ENCODE measurements at regions of chr20 and their contacts with region 1.

Region 1: DNA sequence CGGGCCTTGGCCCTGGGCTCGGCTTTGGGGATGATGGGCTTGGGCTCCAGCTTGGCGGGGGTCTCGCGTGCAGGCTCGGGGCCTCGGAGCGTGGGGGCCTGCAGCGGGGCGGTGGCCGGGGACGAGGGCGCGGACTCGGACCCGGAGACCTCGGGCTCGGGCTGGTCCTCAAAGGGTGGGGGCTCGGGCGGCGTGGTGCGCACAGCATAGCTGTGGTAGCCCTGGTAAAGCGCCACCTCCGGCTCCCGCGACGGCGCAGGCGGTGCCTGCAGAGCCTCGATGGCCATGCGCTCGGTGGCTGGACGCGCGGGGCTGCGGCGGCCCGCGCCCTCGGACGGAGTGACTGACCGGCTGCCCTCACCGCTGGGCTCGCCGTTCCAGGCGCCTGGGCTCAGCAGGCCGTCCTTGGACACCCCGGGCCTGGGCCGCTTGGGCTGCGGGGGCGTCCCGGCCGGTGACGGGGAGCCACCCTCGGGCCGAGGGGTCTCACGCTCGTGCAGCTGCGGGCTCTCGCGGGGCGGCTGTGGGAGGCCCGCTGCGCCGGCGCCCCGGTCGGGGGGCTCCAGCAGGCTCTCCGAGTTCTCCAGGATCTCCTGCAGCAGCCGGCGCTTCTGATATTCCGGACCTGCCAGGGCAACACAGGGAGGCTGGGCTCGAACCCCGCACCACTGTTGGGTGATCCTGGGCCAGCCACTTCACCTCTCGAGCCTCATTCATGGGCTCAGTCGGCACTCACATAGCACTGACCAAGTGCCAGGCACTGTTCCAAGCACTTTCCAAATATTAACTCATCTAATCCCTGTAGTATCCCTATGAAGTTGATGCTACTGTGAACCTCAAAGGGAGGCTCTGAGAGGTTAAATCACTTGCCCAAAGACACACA is 71.0 kb downstream of the JPH2 start:
- DNase-seq: no peak
- ATAC-seq: no peak
- H3K4me3 ChIP-seq: no peak overlapping the region
- H3K27ac ChIP-seq: no peak overlapping the region
- H3K4me1 ChIP-seq: peaks cover 0 to 9% of the 10 kb centered on the region in 2 experiments; a peak in 2 of 5 replicates
- H3K27me3 ChIP-seq: peaks cover 13 to 57% of the 10 kb centered on the region in 2 experiments
- CTCF ChIP-seq: no peak
- EP300 ChIP-seq: no peak
- POLR2A ChIP-seq: no peak
- RAD21 ChIP-seq: no peak

Region 2: DNA sequence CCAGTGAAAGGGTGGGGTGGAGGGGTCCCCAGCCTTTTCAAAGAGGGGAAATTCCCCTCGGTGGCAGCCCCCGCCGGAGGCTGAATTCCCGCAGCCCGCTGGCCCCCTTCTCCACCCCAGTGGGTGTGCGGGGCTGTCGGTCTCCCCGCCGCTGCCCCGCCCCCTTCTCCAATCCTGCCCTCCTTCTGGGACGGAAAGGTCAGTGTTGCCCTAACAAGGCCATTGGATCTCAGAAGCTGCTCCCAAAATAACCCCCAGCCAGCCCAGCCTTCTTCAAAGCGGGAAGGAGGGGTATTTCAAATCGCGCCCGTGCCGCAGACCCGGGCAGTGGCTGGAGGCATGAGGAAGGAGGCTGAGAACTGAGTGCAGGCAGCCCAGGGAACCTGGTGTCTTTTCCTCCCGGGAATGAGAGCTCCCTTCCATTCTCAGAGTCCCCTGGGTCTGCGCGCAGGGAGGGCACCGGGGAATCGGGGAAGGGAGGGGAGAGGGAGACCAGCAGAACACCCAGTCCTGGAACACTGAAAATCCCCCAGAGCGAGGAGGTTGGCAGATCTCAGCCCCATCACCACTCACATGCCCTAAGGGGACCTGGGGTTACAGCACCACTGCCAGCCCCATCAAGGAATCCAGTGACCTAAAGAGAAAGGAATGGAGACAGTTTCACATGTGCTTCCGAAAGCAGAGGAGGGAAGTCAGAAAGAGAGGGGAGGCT is 71.2 kb after region 1 on chr20 and contains the start of gene JPH2:
- CTCF ChIA-PET with region 1: interaction called, 38 read pairs
- POLR2A ChIA-PET with region 1: interaction called, 5 read pairs
- in situ Hi-C with region 1: loop called (anchors 5 kb)
- intact Hi-C with region 1: loop called (anchors 1 kb)
- DNase-seq: no peak
- ATAC-seq: no peak
- H3K4me3 ChIP-seq: no peak within 1 kb of the TSS
- H3K27ac ChIP-seq: no peak within 1 kb of the TSS
- H3K4me1 ChIP-seq: peaks cover 0 to 4% of the 10 kb centered on the region in 2 experiments; a peak in 1 of 5 replicates
- H3K27me3 ChIP-seq: peaks cover 24 to 55% of the 10 kb centered on the region in 2 experiments; a peak in 4 of 5 replicates
- CTCF ChIP-seq: no peak
- EP300 ChIP-seq: no peak
- POLR2A ChIP-seq: no peak
- RAD21 ChIP-seq: no peak
- polyA plus RNA-seq, gene JPH2: not detected

Measured in K562 (cell line).